ENCODE measurements at regions of chr2 and their contacts with region 1.

Region 1: GRCh38 chr2:143357966-143358365 is 228.7 kb downstream of the ARHGAP15 start:
- DNase-seq: no peak
- ATAC-seq: no peak
- H3K4me3 Mint-ChIP-seq: no peak overlapping the region
- H3K27ac Mint-ChIP-seq: no peak overlapping the region
- H3K4me1 Mint-ChIP-seq: peaks cover 14% of the 10 kb centered on the region
- H3K27me3 Mint-ChIP-seq: no peaks in the 10 kb centered on the region

Region 2: GRCh38 chr2:143558665-143559064 is 200.7 kb after region 1 on chr2:
- CTCF ChIA-PET with region 1: no interaction called
- POLR2A ChIA-PET with region 1: interaction called, 11 read pairs
- intact Hi-C with region 1: no loop called
- DNase-seq: no peak
- ATAC-seq: peak; percentile 39
- H3K4me3 Mint-ChIP-seq: no peak overlapping the region
- H3K27ac Mint-ChIP-seq: no peak overlapping the region
- H3K4me1 Mint-ChIP-seq: peaks cover 11% of the 10 kb centered on the region
- H3K27me3 Mint-ChIP-seq: no peaks in the 10 kb centered on the region